Ovary (tissue), 10 donors: ENCODE measurements at regions of chr11 and their contacts with region 1.

Region 1: DNA sequence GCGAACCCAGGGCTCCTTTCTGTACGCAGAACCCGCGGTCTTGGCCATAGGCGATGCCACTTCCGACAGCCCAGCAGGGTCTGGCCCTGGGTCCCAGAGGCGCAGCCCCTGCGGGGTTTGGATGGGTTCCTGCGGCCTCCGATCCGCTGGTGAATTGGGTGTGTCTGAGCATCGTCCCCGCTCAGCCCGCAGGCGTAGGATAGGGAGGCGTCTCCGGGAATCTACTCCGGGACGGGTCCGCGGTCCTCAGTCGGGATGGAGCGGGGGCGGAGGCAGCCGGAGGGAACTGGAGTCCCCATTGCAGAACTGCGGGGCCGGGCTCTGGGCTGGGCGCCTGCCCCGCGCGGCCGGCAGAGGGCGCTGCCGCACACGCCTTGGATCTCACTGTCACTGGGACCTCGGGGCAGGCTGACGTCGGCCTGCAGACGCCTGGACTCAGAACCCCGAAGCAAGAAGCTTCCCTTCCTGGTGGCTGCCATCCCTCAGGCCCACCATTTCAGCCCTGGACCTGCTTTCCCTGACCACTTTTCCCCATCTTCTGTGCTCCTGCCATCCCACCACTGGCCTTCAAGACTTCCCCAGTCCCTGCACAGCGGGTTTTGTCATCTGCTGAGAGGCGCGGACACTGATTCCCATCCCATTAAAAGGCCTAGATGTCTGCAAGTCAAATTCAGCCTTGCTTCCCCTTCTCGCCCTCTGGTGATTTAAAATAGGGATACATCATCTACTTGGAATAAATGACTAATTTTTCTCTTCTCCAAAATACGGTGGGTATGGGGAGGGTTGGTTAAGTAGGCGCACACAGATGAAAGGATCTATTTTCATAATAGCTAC is 38.3 kb upstream of the CREB3L1 start:
- DNase-seq: peak; percentile 86 to 95 (median 91)
- H3K4me3 ChIP-seq: peak overlapping the region; percentile 40
- H3K27ac ChIP-seq: peak overlapping the region; percentile 78 to 95
- H3K4me1 ChIP-seq: peaks cover 4% of the 10 kb centered on the region
- H3K27me3 ChIP-seq: no peaks in the 10 kb centered on the region
- CTCF ChIP-seq: peak; percentile 98 to 99 (median 99)
- EP300 ChIP-seq: no peak
- POLR2A ChIP-seq: peak; percentile 4

Region 2: GRCh38 chr11:45964911-45965389 is 274.2 kb before region 1 on chr11:
- intact Hi-C with region 1: loop called in 1 of 4 experiments (anchors 10 kb)
- DNase-seq: peak; percentile 59 to 74 (median 65)
- H3K4me3 ChIP-seq: no peak overlapping the region
- H3K27ac ChIP-seq: peak overlapping the region in 1 of 2 donors; percentile 0
- H3K4me1 ChIP-seq: no peaks in the 10 kb centered on the region
- H3K27me3 ChIP-seq: no peaks in the 10 kb centered on the region
- CTCF ChIP-seq: peak; percentile 78 to 85 (median 79)
- EP300 ChIP-seq: no peak
- POLR2A ChIP-seq: no peak

Region 3: DNA sequence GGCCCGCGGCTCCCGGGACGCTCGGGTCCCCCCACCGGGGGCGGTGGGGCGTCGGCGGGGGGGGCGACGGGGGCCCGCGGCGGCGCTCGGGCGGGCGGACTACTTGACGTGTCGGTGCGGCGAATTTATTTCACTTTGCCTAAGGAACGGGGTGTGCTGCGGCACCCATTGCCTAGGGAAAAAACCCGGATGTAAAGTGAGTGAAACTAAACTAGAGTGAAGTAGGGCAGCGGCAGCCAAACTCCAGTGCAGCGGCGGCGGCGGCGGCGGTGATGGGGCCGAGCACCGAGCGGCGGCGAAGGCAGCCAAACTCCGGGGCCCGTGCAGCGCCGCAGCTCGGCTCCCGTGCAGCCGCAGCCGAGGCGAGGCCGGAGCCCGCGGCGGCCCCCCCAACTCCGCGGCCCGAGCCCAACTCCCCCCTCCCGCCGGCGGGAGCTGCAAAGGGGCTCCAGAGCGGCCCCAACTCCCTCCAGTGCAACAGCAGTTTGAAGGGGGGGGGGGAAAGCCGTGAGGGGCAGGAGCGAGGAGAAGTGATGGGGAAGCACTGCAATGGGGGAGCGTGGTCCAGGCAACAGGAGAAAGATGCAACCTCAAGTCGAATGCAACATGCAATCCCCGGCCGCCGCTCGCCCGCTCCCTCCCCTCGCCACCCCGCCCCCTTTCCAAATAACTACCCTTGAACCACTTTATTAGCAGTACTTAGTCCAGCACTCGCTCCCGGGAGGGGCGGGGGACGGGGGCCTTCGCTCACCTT is 117.3 kb before region 1 on chr11:
- intact Hi-C with region 1: loop called in 1 of 4 experiments (anchors 10 kb)
- DNase-seq: peak; percentile 78 to 86 (median 84)
- H3K4me3 ChIP-seq: peak overlapping the region; percentile 50
- H3K27ac ChIP-seq: peak overlapping the region; percentile 93 to 96
- H3K4me1 ChIP-seq: no peaks in the 10 kb centered on the region
- H3K27me3 ChIP-seq: no peaks in the 10 kb centered on the region
- CTCF ChIP-seq: peak in 1 of 3 donors; percentile 1
- EP300 ChIP-seq: no peak
- POLR2A ChIP-seq: peak; percentile 14

Region 4: GRCh38 chr11:46308631-46309419 is 69.6 kb after region 1 on chr11:
- intact Hi-C with region 1: loop called (anchors 1 to 2 kb)
- DNase-seq: peak; percentile 68 to 89 (median 84)
- H3K4me3 ChIP-seq: no peak overlapping the region
- H3K27ac ChIP-seq: no peak overlapping the region
- H3K4me1 ChIP-seq: no peaks in the 10 kb centered on the region
- H3K27me3 ChIP-seq: no peaks in the 10 kb centered on the region
- CTCF ChIP-seq: peak; percentile 86 to 93 (median 92)
- EP300 ChIP-seq: no peak
- POLR2A ChIP-seq: no peak